ENCODE measurements at regions of chr16 and their contacts with region 1.

Region 1: GRCh38 chr16:82344157-82344556 is 174.1 kb upstream of the MPHOSPH6 start:
- DNase-seq: peak in 1 of 2 experiments; percentile 35
- H3K4me3 ChIP-seq: no peak overlapping the region
- H3K4me3 Mint-ChIP-seq: no peak overlapping the region
- H3K27ac Mint-ChIP-seq: no peak overlapping the region
- H3K4me1 ChIP-seq: no peaks in the 10 kb centered on the region
- H3K4me1 Mint-ChIP-seq: no peaks in the 10 kb centered on the region
- H3K27me3 ChIP-seq: no peaks in the 10 kb centered on the region
- H3K27me3 Mint-ChIP-seq: peaks cover 20% of the 10 kb centered on the region
- CTCF ChIP-seq: peak in 1 of 2 experiments; percentile 72

Region 2: DNA sequence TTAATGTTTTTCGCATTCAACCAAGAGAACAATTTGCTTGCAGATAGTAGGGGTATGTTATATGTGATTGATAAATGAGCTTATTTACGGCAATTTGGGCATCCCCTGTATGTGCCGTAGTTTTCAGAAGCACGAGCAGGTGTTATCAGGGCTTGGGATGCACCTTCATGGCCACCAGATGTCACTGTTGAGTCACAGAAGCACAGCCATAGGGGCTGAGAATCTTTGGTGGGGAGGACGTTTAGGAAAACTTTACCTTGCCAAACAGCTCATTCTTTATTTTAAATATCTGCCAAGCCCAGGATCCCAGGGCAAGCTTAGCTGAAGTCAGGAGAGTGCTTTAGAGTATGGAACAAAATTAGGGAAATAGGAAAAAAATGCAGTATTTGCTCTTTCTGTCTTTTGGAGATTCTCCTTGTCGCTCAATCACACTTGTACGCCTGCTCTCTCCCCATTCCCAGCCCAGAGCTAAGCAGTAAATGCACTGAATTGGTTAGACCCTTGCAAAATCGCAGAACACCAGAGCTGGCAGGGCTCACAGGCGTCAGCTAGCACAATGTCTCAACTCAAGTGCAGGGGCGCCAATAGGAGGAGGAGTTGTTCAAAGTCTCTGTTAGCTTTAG is 80.5 kb before region 1 on chr16:
- CTCF ChIA-PET with region 1: interaction called, 74 read pairs
- POLR2A ChIA-PET with region 1: no interaction called
- intact Hi-C with region 1: loop called (anchors 1 kb)
- DNase-seq: peak; percentile 61 to 73
- H3K4me3 ChIP-seq: no peak overlapping the region
- H3K4me3 Mint-ChIP-seq: no peak overlapping the region
- H3K27ac Mint-ChIP-seq: no peak overlapping the region
- H3K4me1 ChIP-seq: 0 out of 2 replicates have a peak, but pooled peaks cover 3% of the 10 kb centered on the region
- H3K4me1 Mint-ChIP-seq: peaks cover 4% of the 10 kb centered on the region
- H3K27me3 ChIP-seq: no peaks in the 10 kb centered on the region
- H3K27me3 Mint-ChIP-seq: peaks cover 22% of the 10 kb centered on the region
- CTCF ChIP-seq: peak; percentile 96

Region 3: GRCh38 chr16:82379551-82379950 is 35.4 kb after region 1 on chr16:
- CTCF ChIA-PET with region 1: no interaction called
- POLR2A ChIA-PET with region 1: no interaction called
- intact Hi-C with region 1: no loop called
- DNase-seq: no peak
- H3K4me3 ChIP-seq: no peak overlapping the region
- H3K4me3 Mint-ChIP-seq: no peak overlapping the region
- H3K27ac Mint-ChIP-seq: no peak overlapping the region
- H3K4me1 ChIP-seq: no peaks in the 10 kb centered on the region
- H3K4me1 Mint-ChIP-seq: no peaks in the 10 kb centered on the region
- H3K27me3 ChIP-seq: no peaks in the 10 kb centered on the region; the same call in 1 of the 2 replicates
- H3K27me3 Mint-ChIP-seq: peaks cover 13% of the 10 kb centered on the region
- CTCF ChIP-seq: no peak